ENCODE measurements at regions of chr2 and their contacts with region 1.

Region 1: DNA sequence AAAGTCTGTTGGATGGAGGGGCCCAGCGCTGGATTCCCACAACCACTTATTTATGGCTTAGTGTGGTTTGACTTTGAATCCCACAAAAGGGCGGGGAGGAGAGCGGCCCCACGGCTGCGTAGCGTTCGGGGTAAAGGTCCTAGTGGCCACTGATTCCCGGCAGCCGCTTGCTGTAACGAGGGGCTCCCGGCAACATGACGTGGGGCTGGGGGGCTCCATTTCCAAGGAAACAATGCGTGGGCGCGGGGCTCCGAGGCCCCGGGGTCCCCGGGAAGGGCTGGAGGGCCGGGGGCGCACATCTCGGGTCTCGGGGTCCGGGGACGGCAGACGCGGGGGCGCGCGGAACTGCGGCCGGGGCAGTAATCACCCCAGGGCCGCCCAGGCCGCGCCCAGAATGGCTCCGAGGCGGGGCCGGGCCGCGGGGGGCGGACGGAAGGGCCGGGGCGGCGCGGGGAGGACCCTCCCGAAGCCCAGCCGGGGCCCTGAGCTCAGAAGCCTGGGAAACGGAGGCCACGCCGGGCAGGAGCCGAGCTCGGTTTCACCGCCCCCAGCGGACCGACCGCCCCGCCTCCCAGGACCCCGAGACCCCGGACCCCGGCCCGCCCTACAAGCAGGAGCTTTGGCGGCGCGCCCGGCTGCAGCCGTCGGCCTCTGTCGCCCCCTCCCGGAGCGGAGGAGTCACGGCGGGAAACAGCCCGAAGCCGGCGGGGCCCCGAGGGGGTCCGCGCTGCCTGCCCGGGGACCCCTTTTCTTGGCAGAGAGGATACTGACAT is 11.9 kb upstream of the MLPH start:
- DNase-seq: no peak
- H3K4me3 ChIP-seq: peak overlapping the region; percentile 57 to 79
- H3K27ac ChIP-seq: peak overlapping the region; percentile 93
- H3K4me1 ChIP-seq: peaks cover 33% of the 10 kb centered on the region
- H3K27me3 ChIP-seq: no peaks in the 10 kb centered on the region
- CTCF ChIP-seq: peak; percentile 82 to 96 (median 91)
- POLR2A ChIP-seq: peak in 1 of 2 donors; percentile 49

Region 2: GRCh38 chr2:237154082-237154638 is 321.0 kb before region 1 on chr2:
- intact Hi-C with region 1: loop called (anchors 10 kb)
- DNase-seq: peak in 1 of 2 donors; percentile 83
- H3K4me3 ChIP-seq: no peak overlapping the region
- H3K27ac ChIP-seq: peak overlapping the region; percentile 98
- H3K4me1 ChIP-seq: peaks cover 34% of the 10 kb centered on the region
- H3K27me3 ChIP-seq: no peaks in the 10 kb centered on the region
- CTCF ChIP-seq: peak; percentile 23 to 53 (median 24)
- POLR2A ChIP-seq: no peak

Region 3: DNA sequence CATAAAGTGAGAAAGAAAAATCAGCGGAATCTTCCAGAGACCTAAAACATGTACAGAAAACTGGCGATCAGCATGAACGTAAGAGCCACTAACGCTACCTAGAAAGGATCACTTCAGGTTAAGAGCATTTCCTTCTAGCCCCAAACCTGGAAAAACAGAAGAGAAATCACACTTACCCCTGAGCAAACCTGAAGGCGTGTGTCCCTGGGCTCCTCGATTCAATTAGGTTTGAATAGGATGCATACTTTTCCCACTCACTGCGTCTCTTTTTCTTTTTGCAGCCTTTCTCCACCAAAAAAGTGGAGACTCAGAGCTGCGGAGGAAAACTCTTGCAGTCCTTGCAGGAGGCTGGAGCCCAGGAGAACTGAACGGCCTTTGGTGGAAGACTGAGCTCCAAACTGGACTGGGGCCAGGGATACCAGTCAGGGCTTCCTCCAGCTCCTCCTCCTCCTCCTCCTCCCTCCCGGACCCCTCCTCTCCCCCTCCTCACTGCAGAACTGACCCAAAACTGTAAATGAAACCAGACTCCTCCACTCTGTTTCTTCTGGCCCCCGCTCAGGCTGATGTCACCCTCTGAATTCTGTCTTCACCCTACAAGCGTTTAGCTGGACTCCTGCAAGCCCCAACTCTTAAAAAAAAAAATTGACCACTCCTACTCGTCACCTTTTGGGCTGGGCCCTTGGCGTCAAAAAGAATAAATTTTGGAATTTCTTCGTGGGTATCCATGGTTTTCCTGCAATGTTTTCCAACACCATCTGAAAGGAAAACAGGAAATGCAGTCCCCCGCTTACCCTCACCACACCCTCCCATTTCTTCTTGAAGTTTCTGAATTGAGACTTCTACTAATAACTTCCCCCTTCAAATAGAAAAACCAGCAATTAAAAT is 61.1 kb before region 1 on chr2 and contains the start of gene COL6A3:
- intact Hi-C with region 1: loop called (anchors 5 kb)
- DNase-seq: peak in 1 of 2 donors; percentile 97
- H3K4me3 ChIP-seq: peak within 1 kb of the TSS; percentile 65 to 71
- H3K27ac ChIP-seq: peak within 1 kb of the TSS; percentile 98
- H3K4me1 ChIP-seq: peaks cover 7% of the 10 kb centered on the region
- H3K27me3 ChIP-seq: no peaks in the 10 kb centered on the region
- CTCF ChIP-seq: no peak
- POLR2A ChIP-seq: peak in 1 of 2 donors; percentile 78
- total RNA-seq, gene COL6A3: 315 TPM

Region 4: DNA sequence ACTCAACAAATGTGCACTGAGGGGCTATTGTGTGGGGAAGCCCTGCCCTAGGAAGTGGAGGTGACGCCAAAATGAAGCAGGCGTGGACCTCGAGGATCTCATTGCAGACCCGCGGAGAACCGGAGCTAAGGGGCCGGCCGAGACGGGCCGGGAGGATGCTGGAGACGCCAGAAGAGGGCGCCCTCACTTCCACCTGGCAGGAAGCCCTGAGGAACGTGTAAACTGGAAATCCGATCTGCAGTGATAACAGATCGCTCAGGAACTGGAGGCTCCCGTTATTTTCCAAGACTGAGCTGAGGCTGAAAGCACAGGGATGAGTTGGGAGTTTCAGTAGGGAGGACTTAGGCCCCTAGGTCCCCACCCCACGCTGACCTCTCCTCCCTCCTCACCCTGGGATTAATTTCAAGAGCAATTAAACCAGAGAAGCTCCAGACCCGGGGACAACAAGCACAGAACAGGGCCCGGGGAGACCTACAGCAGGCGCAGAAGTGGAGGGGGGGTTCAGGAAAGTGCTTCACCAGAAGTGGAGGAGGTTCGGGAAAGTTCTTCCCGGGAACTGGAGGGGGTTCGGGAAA is 53.5 kb before region 1 on chr2:
- intact Hi-C with region 1: loop called (anchors 2 kb)
- DNase-seq: peak in 1 of 2 donors; percentile 91
- H3K4me3 ChIP-seq: no peak overlapping the region
- H3K27ac ChIP-seq: peak overlapping the region; percentile 89
- H3K4me1 ChIP-seq: peaks cover 10% of the 10 kb centered on the region
- H3K27me3 ChIP-seq: no peaks in the 10 kb centered on the region
- CTCF ChIP-seq: peak; percentile 63 to 79 (median 66)
- POLR2A ChIP-seq: no peak

Region 5: DNA sequence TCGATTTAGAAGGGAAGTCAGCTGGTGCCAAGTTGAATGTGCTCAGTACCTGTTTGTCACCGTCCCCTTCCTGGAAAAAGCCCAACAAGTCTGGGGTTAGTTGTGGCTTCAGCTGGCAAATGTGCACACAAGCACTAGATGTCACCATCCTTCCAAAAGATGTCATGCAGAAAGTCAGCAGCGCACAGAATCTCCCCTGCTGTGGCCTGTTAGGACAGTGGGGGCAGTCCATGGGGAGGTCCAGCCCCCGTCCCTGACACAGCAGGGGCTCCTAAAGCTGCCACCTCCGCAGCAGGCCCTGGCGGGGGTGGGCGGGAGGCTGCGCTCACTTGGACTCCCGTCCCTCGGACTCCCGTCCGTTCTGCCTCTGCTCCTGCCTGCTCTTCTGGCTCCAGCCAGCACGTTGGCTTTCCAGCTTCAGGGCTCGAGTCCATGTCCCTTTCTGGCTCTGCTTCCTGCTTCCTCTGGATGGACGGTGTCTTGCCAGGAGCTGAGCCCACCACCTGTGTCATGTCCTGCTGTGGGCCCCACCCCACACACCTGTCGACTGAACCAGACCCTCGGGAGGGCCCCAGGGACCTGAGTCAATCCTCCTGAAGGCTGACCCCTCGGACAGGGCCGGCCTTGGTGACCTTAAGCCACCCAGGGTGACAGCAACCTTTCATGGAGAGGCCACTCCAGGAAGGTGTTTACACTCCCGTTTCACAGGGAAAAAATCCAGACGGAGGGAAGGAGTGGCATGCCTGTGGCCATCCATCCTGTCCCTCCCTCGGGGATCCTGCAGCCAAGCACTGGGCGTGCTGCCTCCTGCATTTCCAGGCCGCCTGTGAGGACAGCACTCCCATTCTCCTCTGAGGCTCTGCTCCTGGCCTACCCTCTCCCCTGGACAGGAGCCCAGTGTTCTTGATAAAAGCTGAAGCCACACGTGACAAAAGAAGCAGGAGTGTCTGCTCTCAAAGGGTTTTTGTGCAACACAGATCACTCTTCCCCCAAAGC is 106.9 kb after region 1 on chr2:
- intact Hi-C with region 1: no loop called
- DNase-seq: peak in 1 of 2 donors; percentile 92
- H3K4me3 ChIP-seq: no peak overlapping the region
- H3K27ac ChIP-seq: peak overlapping the region; percentile 61
- H3K4me1 ChIP-seq: peaks cover 12% of the 10 kb centered on the region
- H3K27me3 ChIP-seq: no peaks in the 10 kb centered on the region
- CTCF ChIP-seq: peak in 2 of 3 experiments; percentile 7 to 52
- POLR2A ChIP-seq: no peak

Region 6: DNA sequence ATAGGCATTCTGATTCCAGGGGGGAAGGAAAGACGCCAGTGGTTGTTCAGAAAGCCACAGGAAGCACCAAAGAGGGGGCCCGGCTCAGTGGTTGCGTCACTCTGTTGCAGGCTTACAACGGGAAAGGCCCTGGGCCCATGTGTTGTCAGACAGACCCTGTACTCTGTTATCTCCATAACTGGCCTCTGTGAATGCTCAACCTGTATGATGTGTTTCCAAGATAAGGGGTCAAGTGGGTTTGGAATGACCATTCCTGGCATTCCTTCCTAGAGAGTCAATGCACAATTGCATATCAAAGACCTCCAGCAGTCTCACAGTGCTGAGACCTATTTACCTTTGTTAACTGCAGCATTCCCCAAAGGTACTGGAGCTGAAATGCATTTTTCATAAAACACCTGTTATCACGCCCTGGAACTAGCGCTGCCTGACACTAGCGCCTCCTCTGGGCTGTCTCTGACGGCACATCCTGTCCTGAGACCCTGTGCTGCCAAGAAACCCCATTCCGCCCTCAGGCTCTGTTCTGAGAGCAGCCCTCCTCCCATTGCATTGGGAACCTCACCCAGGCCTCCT is 139.1 kb after region 1 on chr2:
- intact Hi-C with region 1: no loop called
- DNase-seq: no peak
- H3K4me3 ChIP-seq: no peak overlapping the region
- H3K27ac ChIP-seq: no peak overlapping the region
- H3K4me1 ChIP-seq: peaks cover 37% of the 10 kb centered on the region
- H3K27me3 ChIP-seq: no peaks in the 10 kb centered on the region
- CTCF ChIP-seq: no peak
- POLR2A ChIP-seq: no peak

Measured in vagina (tissue), 2 donors.